ENCODE measurements at regions of chr17 and their contacts with region 1.

Region 1: GRCh38 chr17:75109407-75110233 is at the start of gene ARMC7:
- DNase-seq: peak; percentile 81 to 88
- H3K4me3 ChIP-seq: peak within 1 kb of the TSS; percentile 69 to 88 (median 82)
- H3K27ac ChIP-seq: peak within 1 kb of the TSS; percentile 48 to 54
- H3K4me1 ChIP-seq: no peaks in the 10 kb centered on the region
- H3K27me3 ChIP-seq: no peaks in the 10 kb centered on the region
- CTCF ChIP-seq: no peak
- POLR2A ChIP-seq: peak; percentile 60
- total RNA-seq, gene ARMC7: 3.4 to 6.7 (median 5.6) TPM

Region 2: DNA sequence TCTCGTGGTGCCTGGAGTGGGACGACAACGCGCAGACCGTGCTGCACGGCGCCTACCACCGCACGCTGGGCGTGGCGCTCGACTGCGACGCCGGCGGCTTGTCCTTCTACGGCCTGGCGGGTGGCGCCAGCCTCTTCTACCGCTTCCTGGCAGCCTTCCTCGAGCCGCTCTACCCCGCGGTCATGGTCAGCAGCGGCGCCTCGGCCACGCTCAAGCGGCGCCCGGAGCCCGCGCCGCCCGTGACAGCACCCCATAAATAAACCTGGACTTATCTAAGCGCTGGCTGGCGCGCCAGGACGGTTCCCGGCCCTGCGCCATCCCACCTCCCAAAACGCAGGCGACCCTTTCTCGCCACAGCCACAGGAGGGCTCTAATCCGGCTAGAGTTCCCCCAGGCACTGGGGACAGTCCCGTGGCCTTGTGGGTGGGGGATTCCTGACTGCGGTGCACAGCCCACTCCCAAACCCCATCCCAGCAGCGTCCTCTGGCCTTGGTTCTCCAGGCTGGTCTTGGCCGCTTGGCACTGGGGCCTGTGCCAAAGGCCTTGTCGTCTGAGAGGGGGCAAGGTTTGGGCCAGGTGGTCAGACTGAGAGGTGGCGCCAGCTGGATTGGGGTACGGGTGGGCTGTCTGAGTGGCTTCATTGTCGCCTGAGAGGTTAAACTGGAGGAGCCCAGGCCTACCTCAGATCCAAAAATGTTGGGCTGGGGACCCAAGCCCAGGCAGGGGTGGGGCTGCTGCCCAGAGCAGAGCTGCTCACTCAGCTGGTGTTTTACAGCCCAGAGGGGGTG is 31.9 kb before region 1 on chr17:
- intact Hi-C with region 1: loop called (anchors 1 kb)
- DNase-seq: peak in 1 of 2 donors; percentile 67
- H3K4me3 ChIP-seq: peak overlapping the region; percentile 35 to 62 (median 35)
- H3K27ac ChIP-seq: peak overlapping the region; percentile 74 to 82
- H3K4me1 ChIP-seq: peaks cover 0 to 17% of the 10 kb centered on the region in 2 donors
- H3K27me3 ChIP-seq: no peaks in the 10 kb centered on the region
- CTCF ChIP-seq: peak in 1 of 3 donors; percentile 6
- POLR2A ChIP-seq: no peak

Region 3: DNA sequence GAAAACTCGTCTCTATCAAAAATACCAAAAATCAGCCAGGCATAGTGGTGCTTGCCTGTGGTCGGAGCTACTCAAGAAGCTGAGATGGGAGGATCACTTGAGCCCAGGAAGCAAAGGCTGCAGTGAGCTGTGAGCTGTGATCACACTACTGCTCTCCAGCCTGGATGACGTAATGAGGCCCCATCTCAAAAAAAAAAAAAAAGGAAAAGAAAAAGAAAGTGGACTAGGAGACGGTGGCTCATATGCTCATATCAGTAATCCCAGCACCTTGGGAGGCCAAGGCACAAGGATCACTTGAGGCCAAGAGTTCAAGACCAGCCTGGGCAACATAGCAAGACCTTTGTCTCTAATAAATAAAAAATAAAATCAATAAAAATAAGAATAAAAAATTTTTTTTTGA is 82.0 kb after region 1 on chr17:
- intact Hi-C with region 1: loop called (anchors 10 kb)
- DNase-seq: no peak
- H3K4me3 ChIP-seq: no peak overlapping the region
- H3K27ac ChIP-seq: no peak overlapping the region
- H3K4me1 ChIP-seq: no peaks in the 10 kb centered on the region
- H3K27me3 ChIP-seq: no peaks in the 10 kb centered on the region
- CTCF ChIP-seq: no peak
- POLR2A ChIP-seq: no peak

Measured in breast epithelium (tissue), 4 donors.